ENCODE measurements at regions of chr4 and their contacts with region 1.

Region 1: DNA sequence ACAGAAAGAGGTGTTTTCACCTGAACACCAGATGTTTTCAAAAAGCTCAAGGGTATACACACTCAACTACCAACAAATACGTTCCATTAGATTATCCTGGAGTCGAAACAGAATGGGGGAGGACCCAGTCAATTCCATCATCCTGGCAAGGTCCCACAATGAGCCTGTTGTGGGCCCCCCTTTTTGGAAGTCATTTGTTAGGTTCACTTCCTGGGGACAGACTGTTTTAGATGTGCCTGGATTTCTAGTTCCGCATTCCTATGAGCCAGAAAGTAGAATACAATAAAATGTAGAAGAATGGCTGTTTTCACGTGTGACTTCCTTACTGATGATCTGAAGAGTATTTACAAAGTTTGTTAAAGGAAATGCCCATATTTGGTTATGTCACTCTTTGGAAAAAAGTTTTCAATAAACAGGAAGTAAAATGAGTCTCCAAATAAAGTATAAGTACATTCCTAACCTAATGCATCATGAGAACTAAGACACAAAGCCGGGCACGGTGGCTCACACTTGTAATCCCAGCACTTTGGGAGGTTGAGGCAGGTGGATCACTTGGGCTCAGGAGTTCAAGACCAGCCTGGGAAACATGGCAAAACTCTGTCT is 192.5 kb downstream of the MAML3 start:
- DNase-seq: no peak
- H3K4me3 ChIP-seq: no peak overlapping the region
- H3K27ac ChIP-seq: no peak overlapping the region
- H3K4me1 ChIP-seq: no peaks in the 10 kb centered on the region
- H3K27me3 ChIP-seq: peaks cover 44% of the 10 kb centered on the region
- CTCF ChIP-seq: no peak

Region 2: DNA sequence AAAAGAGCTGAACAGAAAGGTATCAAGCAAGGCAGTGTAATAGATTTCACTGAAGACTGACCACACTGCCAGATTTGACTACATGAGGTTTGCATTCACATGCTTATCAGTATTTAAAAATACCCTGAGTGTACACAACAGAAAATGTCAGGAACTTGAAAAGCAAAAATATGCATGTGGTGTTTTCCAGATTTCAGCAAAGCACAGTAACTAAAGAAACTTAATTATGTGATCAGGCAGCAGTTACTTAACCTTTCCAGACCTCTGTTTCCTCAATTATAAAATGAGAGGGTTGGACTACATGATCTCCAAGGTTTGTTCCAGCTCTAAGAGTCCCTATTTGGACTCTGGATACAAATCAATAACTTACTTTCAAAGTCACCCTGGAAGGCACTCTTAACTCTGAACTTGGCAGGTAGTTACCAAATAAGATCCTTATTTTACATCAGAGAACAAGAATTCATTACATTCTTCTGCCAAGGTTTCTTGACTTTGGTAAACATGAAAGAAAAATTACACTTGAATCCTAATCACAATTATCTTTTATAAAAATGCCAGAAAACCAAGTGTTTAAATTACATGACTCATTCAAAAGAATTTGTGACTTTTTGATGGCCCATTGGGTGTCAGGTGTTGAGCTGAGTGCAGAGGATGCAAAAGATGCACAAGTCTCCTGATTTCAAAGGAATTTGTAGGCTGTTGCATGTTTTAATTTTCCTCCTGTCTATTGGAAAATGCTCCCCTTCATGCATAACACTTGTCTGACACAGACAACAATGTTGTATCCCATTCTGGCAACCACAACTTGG is 54.2 kb before region 1 on chr4:
- CTCF ChIA-PET with region 1: no interaction called
- dilution Hi-C with region 1: loop called (anchors 5 kb)
- in situ Hi-C with region 1: no loop called
- intact Hi-C with region 1: no loop called
- DNase-seq: no peak
- H3K4me3 ChIP-seq: no peak overlapping the region
- H3K27ac ChIP-seq: no peak overlapping the region
- H3K4me1 ChIP-seq: peaks cover 1% of the 10 kb centered on the region
- H3K27me3 ChIP-seq: no peaks in the 10 kb centered on the region
- CTCF ChIP-seq: no peak

Region 3: DNA sequence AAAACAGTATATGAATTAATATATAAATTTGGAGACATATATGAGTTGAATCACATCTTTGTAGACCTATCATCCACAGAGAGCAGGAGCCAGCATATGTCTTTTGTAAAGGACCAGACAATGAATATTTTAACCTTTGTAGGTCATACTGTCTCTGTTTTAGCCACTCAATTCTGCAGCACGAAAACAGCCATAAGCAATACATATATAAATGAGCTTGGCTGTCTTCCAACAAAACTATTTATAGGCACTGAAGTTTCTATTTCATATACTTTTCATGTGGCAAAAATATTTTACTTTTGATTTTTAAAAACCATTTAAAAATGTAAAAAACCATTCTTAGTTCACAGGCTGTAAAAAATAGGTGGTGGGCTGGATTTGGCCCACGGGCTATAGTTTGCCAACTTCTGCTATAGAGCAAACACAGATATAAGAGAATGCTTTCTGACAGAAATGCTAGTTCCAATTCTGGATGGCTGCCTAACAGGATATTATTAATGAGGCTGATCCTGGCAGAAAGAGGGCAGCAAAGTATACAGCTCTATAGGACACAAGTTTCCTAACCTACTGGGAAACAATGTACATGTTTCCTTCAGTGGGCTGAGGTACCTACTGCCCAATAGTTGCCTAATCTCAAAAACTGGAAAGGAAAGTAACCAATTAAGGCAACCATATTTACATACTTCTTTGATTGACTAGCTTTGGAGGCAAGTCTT is 665.4 kb after region 1 on chr4:
- CTCF ChIA-PET with region 1: no interaction called
- dilution Hi-C with region 1: no loop called
- in situ Hi-C with region 1: no loop called
- intact Hi-C with region 1: no loop called
- DNase-seq: no peak
- H3K4me3 ChIP-seq: no peak overlapping the region
- H3K27ac ChIP-seq: no peak overlapping the region
- H3K4me1 ChIP-seq: no peaks in the 10 kb centered on the region
- H3K27me3 ChIP-seq: no peaks in the 10 kb centered on the region
- CTCF ChIP-seq: peak in 1 of 2 donors; percentile 26

Measured in mammary epithelial cell (primary cell).